ENCODE measurements at regions of chr3 and their contacts with region 1.

Region 1: DNA sequence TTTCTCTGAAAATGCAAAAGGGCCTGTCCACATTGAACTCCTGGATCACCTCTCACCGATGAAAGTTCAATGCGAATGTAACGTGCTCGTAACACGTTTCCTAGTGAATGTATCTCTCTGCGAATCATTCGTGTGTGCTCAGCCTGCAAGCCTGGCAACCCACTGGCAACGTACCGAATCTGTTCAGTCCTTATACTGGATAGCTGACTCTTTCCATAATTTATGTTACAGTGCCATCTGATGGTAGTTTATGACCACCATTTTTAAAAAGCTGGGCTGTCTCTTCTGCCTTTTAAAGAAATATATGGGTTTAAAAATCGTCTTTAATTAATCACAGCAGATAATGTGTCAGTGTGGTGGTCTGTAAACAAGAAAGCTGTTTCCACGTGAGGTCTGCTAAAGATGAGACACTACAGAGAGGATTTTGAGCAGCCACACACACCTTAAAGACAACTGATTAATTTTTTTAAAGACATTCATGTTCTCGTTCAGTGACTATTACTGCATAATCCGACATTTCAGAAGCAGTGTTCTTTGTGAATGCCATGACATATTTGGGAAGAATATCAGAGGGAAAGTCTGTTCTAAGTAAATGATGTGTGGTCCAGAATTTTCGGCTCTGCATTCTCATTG is 69.4 kb upstream of the FOXP1 start:
- DNase-seq: peak; percentile 34
- H3K4me3 Mint-ChIP-seq: no peak overlapping the region
- H3K27ac Mint-ChIP-seq: no peak overlapping the region
- H3K4me1 Mint-ChIP-seq: peaks cover 11% of the 10 kb centered on the region
- H3K27me3 Mint-ChIP-seq: no peaks in the 10 kb centered on the region
- CTCF ChIP-seq: peak; percentile 66

Region 2: DNA sequence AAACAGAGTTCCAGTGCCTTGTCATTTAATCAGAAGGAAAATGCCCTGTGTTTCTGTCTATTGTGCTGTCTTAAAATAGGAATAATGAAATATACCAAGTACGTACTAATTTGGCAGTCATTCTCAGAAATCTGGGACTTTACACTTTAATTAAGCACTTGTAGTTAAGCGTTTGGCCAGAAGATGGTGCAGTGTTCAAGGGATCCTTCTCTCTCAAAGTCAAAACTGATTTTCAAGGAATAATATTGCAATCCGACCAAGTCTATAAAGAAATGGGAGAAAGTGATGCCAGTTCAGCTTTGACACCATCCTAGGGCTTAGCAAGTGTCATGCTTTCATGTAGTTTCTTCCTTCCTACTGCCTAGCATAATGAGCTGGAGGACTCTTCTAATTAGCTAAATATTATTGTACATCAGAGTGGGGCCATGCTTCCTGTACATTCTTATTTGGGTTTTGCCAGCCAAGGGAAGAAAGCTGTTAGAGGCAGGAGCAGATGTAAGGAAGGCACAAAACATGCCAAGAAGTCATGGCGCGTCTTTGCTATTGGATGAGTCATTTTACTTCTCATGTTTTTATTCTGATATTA is 1588.6 kb before region 1 on chr3:
- CTCF ChIA-PET with region 1: interaction called, 18 read pairs
- POLR2A ChIA-PET with region 1: no interaction called
- intact Hi-C with region 1: loop called (anchors 5 kb)
- DNase-seq: peak; percentile 44
- H3K4me3 Mint-ChIP-seq: no peak overlapping the region
- H3K27ac Mint-ChIP-seq: no peak overlapping the region
- H3K4me1 Mint-ChIP-seq: no peaks in the 10 kb centered on the region
- H3K27me3 Mint-ChIP-seq: peaks cover 47% of the 10 kb centered on the region
- CTCF ChIP-seq: peak; percentile 61

Region 3: GRCh38 chr3:70550723-70551319 is 1102.1 kb before region 1 on chr3:
- CTCF ChIA-PET with region 1: interaction called, 4 read pairs
- POLR2A ChIA-PET with region 1: no interaction called
- intact Hi-C with region 1: loop called (anchors 2 kb)
- DNase-seq: peak; percentile 71
- H3K4me3 Mint-ChIP-seq: no peak overlapping the region
- H3K27ac Mint-ChIP-seq: no peak overlapping the region
- H3K4me1 Mint-ChIP-seq: no peaks in the 10 kb centered on the region
- H3K27me3 Mint-ChIP-seq: peaks cover 97% of the 10 kb centered on the region
- CTCF ChIP-seq: peak; percentile 72

Region 4: DNA sequence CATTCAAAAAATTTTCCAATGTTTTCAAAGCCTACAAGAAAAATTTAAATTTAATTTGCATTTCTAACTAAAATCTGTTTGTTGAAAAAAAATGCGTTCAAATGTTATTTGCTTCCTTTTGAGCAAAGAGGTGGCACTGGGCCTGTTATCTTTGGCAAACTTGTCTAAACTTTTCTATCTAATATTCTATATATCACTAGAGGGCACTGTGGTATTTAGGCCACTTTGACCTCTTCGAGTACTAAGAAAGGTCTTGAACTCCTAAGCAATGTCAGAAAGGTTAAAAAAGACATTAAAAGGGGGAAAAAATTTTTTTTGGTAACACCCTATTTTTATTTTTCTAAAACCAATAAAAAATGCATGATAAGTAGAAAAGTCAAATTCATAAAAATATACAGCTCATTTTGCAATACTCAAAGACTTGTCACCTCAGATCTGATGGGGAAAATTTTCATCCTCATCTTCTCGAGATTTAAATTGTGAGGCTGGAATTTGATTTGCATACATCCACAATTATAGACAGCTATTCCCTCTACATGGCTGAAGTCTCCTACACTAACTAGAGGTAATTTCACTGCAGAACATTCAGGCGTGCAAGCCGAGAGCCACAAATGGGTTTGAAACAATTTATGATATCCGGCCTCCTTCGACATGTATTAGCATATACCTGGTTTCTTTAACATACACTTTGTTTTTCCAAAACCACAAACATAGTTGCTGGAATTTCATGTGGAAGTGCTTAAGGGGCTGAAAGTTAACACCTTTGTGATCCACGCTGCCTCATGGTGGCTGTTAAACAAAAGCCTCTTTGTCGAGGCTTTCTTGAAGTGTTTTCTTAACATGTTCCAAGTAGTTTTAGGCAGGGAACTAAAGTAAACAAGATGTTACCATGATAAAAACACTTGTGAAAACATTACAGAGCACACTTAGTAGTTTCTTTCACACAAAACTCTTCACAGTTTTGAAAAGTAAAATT is 645.8 kb before region 1 on chr3:
- CTCF ChIA-PET with region 1: interaction called, 3 read pairs
- POLR2A ChIA-PET with region 1: no interaction called
- intact Hi-C with region 1: loop called (anchors 10 kb)
- DNase-seq: peak; percentile 48
- H3K4me3 Mint-ChIP-seq: no peak overlapping the region
- H3K27ac Mint-ChIP-seq: peak overlapping the region; percentile 63
- H3K4me1 Mint-ChIP-seq: peaks cover 15% of the 10 kb centered on the region
- H3K27me3 Mint-ChIP-seq: no peaks in the 10 kb centered on the region
- CTCF ChIP-seq: peak; percentile 61

Region 5: DNA sequence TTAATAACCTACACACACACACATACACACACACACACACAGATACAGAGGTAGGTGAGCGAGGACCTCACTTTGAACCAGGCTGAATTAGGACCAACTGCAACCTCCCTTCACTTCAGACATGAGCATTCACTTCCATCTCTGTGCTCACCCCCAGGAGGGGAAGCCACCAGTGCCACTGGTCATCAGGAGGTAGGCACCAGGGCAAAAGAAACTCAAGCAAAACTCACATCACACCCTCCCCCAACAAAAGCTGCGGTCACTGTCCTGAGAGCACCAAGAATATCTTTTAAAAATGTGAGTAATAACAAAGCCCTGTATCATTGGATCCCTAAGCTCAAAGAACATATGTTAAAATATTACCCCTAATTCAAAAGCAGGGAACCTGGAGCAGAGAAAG is 77.5 kb before region 1 on chr3:
- CTCF ChIA-PET with region 1: no interaction called
- POLR2A ChIA-PET with region 1: no interaction called
- intact Hi-C with region 1: no loop called
- DNase-seq: no peak
- H3K4me3 Mint-ChIP-seq: no peak overlapping the region
- H3K27ac Mint-ChIP-seq: no peak overlapping the region
- H3K4me1 Mint-ChIP-seq: peaks cover 24% of the 10 kb centered on the region
- H3K27me3 Mint-ChIP-seq: no peaks in the 10 kb centered on the region
- CTCF ChIP-seq: no peak

Region 6: GRCh38 chr3:71681224-71681668 is 28.3 kb after region 1 on chr3:
- CTCF ChIA-PET with region 1: interaction called, 70 read pairs
- POLR2A ChIA-PET with region 1: interaction called, 23 read pairs
- intact Hi-C with region 1: loop called (anchors 1 kb)
- DNase-seq: peak; percentile 80
- H3K4me3 Mint-ChIP-seq: peak overlapping the region; percentile 33
- H3K27ac Mint-ChIP-seq: peak overlapping the region; percentile 83
- H3K4me1 Mint-ChIP-seq: peaks cover 34% of the 10 kb centered on the region
- H3K27me3 Mint-ChIP-seq: no peaks in the 10 kb centered on the region
- CTCF ChIP-seq: peak; percentile 62

Region 7: GRCh38 chr3:71714595-71714994 is 61.7 kb after region 1 on chr3:
- CTCF ChIA-PET with region 1: no interaction called
- POLR2A ChIA-PET with region 1: no interaction called
- intact Hi-C with region 1: no loop called
- DNase-seq: no peak
- H3K4me3 Mint-ChIP-seq: no peak overlapping the region
- H3K27ac Mint-ChIP-seq: no peak overlapping the region
- H3K4me1 Mint-ChIP-seq: no peaks in the 10 kb centered on the region
- H3K27me3 Mint-ChIP-seq: no peaks in the 10 kb centered on the region
- CTCF ChIP-seq: no peak

Region 8: DNA sequence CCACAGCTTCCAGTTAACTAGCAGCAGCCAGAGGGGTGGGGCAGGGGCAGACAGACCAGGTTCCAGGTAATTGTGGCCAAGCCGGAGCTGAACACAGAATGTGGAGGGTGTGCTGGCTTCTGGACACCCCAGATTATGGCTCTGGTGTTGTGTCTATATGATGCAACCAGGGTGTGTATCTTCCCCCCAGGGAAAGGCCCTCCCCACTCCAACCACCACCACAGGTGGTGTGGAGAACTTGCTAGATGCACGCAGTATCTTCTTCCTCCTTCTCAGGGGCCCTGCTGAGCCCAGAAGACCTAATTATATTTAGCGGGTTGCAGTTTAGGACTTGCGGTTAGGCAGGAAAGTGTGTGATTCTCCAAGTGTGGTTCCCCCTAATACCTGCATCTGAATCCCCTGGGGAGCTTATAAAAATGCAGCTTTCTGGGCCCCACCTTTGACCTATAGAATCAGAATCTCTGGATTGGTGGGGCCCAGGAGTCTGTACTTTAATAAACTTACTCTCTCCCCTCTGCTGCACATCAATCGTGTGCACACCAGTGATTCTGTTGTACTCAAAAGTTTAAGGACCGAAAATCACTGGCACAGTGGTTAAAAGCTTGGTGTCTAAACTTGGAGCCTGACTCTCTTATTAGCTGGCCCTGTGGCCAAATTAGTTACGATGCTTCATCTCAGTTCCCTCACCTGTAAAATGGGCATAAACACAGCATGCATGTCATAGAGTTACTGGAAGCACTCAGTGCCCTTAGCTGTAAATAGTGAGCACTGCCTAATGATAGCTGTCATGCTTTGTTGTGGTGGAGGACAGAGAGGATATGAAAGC is 511.1 kb after region 1 on chr3:
- CTCF ChIA-PET with region 1: no interaction called
- POLR2A ChIA-PET with region 1: no interaction called
- intact Hi-C with region 1: no loop called
- DNase-seq: no peak
- H3K4me3 Mint-ChIP-seq: no peak overlapping the region
- H3K27ac Mint-ChIP-seq: no peak overlapping the region
- H3K4me1 Mint-ChIP-seq: peaks cover 21% of the 10 kb centered on the region
- H3K27me3 Mint-ChIP-seq: no peaks in the 10 kb centered on the region
- CTCF ChIP-seq: no peak

Measured in MCF 10A (cell line).